Posterior cingulate gyrus (tissue), 11 donors: ENCODE measurements at regions of chr5 and their contacts with region 1.

Region 1: GRCh38 chr5:90529194-90529938 is at the start of gene LYSMD3:
- DNase-seq: peak; percentile 90 to 99 (median 96)

Region 2: GRCh38 chr5:90409318-90410177 is 119.8 kb before region 1 on chr5 and contains the start of gene CETN3:
- intact Hi-C with region 1: loop called (anchors 1 kb)
- DNase-seq: peak; percentile 91 to 99 (median 94)

Region 3: DNA sequence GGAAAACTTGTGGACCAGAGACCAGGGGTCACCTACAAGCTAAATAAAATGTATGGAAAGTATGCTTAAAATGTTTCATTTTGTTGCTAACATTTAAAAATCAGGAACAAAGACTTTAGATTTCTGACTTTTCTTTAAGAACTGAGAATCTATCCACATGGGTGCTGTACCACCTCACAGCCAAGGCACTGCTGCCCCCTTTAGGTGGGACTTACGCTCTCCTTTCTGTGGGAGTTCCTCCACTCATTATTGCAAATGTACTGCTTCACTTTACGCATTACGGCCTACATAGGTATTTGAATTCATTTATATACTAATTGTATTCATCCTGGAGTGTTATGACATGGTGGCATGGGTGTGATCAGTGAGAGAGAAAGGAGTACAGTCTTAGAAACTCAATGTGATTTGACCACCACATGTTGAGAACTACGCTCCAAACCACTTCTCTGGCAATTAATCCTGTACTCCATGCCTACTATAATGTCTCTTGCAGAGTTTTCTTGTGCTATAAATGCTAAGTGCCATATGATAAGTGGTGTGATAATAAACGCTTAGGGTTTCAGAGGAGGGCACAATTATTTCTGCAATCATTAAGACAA is 95.2 kb before region 1 on chr5:
- intact Hi-C with region 1: loop called (anchors 1 kb)
- DNase-seq: peak in 9 of 10 donors; percentile 39 to 95 (median 71)

Region 4: GRCh38 chr5:90474235-90475109 is 54.9 kb before region 1 on chr5 and contains the starts of genes MBLAC2 and POLR3G:
- intact Hi-C with region 1: loop called (anchors 1 kb)
- DNase-seq: peak; percentile 88 to 98 (median 90)